ENCODE measurements at regions of chr2 and their contacts with region 1.

Region 1: DNA sequence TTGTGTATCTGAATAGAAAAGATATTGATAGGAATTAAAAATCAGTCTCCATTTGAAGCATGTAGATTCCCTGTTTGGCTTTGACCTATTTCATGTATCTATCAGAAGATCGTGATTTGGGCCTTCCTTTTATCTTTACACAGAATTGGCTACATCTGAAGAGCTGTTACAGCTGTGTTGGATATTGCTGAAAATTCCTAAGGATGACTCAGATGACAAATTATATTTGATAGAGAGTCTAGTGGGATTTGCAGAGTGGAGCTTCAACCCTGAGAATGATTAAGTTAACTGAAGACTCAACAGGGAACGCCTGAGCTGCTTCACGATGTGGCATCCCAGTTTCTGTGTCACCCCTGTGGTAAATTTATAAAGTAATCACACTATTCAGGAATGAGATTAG is 4.9 kb upstream of the COL3A1 start:
- DNase-seq: no peak
- ATAC-seq: peak; percentile 41; the same call in 2 of the 3 replicates
- H3K4me3 ChIP-seq: no peak overlapping the region
- H3K27ac ChIP-seq: no peak overlapping the region
- H3K4me1 ChIP-seq: no peaks in the 10 kb centered on the region
- H3K27me3 ChIP-seq: no peaks in the 10 kb centered on the region
- CTCF ChIP-seq: no peak
- EP300 ChIP-seq: no peak
- POLR2A ChIP-seq: no peak
- RAD21 ChIP-seq: no peak

Region 2: DNA sequence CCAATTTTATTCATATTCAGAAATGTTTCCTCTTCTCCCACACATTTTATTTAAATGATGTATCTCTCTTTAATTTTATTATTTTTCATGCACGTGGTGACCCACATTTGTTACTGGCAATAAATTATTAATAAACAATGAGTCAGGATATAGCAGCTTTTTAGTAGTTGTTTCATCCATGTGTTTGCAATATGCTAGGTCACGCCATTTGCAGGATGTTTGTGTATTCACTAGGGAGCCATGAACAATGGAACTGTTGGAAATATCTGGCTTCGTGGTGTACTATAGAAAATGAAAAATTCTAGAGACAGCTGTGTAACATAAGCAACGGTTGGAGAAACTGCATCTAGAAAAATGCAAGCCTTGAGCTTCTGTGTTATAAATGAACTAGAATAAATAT is 171.1 kb before region 1 on chr2:
- CTCF ChIA-PET with region 1: no interaction called
- POLR2A ChIA-PET with region 1: no interaction called
- RAD21 ChIA-PET with region 1: no interaction called
- SMC1A ChIA-PET with region 1: no interaction called
- in situ Hi-C with region 1: no loop called
- intact Hi-C with region 1: no loop called
- DNase-seq: no peak
- ATAC-seq: no peak
- H3K4me3 ChIP-seq: no peak overlapping the region
- H3K27ac ChIP-seq: no peak overlapping the region
- H3K4me1 ChIP-seq: no peaks in the 10 kb centered on the region
- H3K27me3 ChIP-seq: no peaks in the 10 kb centered on the region
- CTCF ChIP-seq: no peak
- EP300 ChIP-seq: no peak
- POLR2A ChIP-seq: no peak
- RAD21 ChIP-seq: no peak

Region 3: GRCh38 chr2:188983427-188984064 is 14.3 kb after region 1 on chr2:
- CTCF ChIA-PET with region 1: interaction called, 20 read pairs
- POLR2A ChIA-PET with region 1: interaction called, 3 read pairs
- RAD21 ChIA-PET with region 1: interaction called, 22 read pairs
- SMC1A ChIA-PET with region 1: interaction called, 13 read pairs
- in situ Hi-C with region 1: no loop called
- intact Hi-C with region 1: no loop called
- DNase-seq: no peak
- ATAC-seq: peak; percentile 54
- H3K4me3 ChIP-seq: no peak overlapping the region
- H3K27ac ChIP-seq: no peak overlapping the region
- H3K4me1 ChIP-seq: no peaks in the 10 kb centered on the region
- H3K27me3 ChIP-seq: no peaks in the 10 kb centered on the region
- CTCF ChIP-seq: peak; percentile 13 to 43 (median 16); a peak in 2 of 6 replicates
- EP300 ChIP-seq: no peak
- POLR2A ChIP-seq: no peak
- RAD21 ChIP-seq: peak; percentile 12; the same call in 1 of the 2 replicates